ENCODE measurements at regions of chr2 and their contacts with region 1.

Region 1: GRCh38 chr2:160493227-160494028 is at the start of gene RBMS1:
- DNase-seq: peak; percentile 60
- ATAC-seq: peak; percentile 67
- H3K4me3 ChIP-seq: peak within 1 kb of the TSS; percentile 88 to 97 (median 95)
- H3K27ac ChIP-seq: peak within 1 kb of the TSS; percentile 96
- H3K4me1 ChIP-seq: peaks cover 32% of the 10 kb centered on the region
- H3K27me3 ChIP-seq: peaks cover 0 to 20% of the 10 kb centered on the region in 2 experiments; a peak in 3 of 5 replicates
- CTCF ChIP-seq: no peak
- EP300 ChIP-seq: no peak
- POLR2A ChIP-seq: peak in 1 of 2 experiments; percentile 79; a peak in 3 of 4 replicates
- RAD21 ChIP-seq: no peak
- total RNA-seq, gene RBMS1: 52.1 and 55.5 TPM in 2 replicates

Region 2: GRCh38 chr2:160324161-160324800 is 169.1 kb before region 1 on chr2:
- CTCF ChIA-PET with region 1: no interaction called
- POLR2A ChIA-PET with region 1: interaction called, 3 read pairs
- in situ Hi-C with region 1: no loop called
- intact Hi-C with region 1: loop called (anchors 2 kb)
- DNase-seq: peak; percentile 34
- ATAC-seq: peak; percentile 54
- H3K4me3 ChIP-seq: no peak overlapping the region
- H3K27ac ChIP-seq: no peak overlapping the region
- H3K4me1 ChIP-seq: peaks cover 35% of the 10 kb centered on the region
- H3K27me3 ChIP-seq: no peaks in the 10 kb centered on the region
- CTCF ChIP-seq: peak; percentile 74
- EP300 ChIP-seq: no peak
- POLR2A ChIP-seq: no peak
- RAD21 ChIP-seq: peak; percentile 65

Region 3: GRCh38 chr2:160406591-160407392 is 86.6 kb before region 1 on chr2:
- CTCF ChIA-PET with region 1: no interaction called
- POLR2A ChIA-PET with region 1: interaction called, 9 read pairs
- in situ Hi-C with region 1: no loop called
- intact Hi-C with region 1: loop called (anchors 1 kb)
- DNase-seq: peak; percentile 35
- ATAC-seq: peak; percentile 49
- H3K4me3 ChIP-seq: peak overlapping the region; percentile 67 to 87 (median 82)
- H3K27ac ChIP-seq: peak overlapping the region; percentile 17
- H3K4me1 ChIP-seq: peaks cover 56% of the 10 kb centered on the region
- H3K27me3 ChIP-seq: no peaks in the 10 kb centered on the region; a peak in 1 of 5 replicates
- CTCF ChIP-seq: peak; percentile 24; the same call in 1 of the 2 replicates
- EP300 ChIP-seq: no peak
- POLR2A ChIP-seq: 0 out of 4 replicates have a peak, but pooled peaks of 1 of the 2 experiments have one; percentile 27
- RAD21 ChIP-seq: no peak

Region 4: GRCh38 chr2:160429248-160430000 is 64.0 kb before region 1 on chr2:
- CTCF ChIA-PET with region 1: no interaction called
- POLR2A ChIA-PET with region 1: interaction called, 9 read pairs
- in situ Hi-C with region 1: no loop called
- intact Hi-C with region 1: loop called (anchors 1 kb)
- DNase-seq: peak; percentile 52
- ATAC-seq: peak; percentile 60
- H3K4me3 ChIP-seq: no peak overlapping the region
- H3K27ac ChIP-seq: no peak overlapping the region
- H3K4me1 ChIP-seq: peaks cover 16% of the 10 kb centered on the region
- H3K27me3 ChIP-seq: no peaks in the 10 kb centered on the region
- CTCF ChIP-seq: peak; percentile 32
- EP300 ChIP-seq: no peak
- POLR2A ChIP-seq: no peak
- RAD21 ChIP-seq: no peak

Region 5: DNA sequence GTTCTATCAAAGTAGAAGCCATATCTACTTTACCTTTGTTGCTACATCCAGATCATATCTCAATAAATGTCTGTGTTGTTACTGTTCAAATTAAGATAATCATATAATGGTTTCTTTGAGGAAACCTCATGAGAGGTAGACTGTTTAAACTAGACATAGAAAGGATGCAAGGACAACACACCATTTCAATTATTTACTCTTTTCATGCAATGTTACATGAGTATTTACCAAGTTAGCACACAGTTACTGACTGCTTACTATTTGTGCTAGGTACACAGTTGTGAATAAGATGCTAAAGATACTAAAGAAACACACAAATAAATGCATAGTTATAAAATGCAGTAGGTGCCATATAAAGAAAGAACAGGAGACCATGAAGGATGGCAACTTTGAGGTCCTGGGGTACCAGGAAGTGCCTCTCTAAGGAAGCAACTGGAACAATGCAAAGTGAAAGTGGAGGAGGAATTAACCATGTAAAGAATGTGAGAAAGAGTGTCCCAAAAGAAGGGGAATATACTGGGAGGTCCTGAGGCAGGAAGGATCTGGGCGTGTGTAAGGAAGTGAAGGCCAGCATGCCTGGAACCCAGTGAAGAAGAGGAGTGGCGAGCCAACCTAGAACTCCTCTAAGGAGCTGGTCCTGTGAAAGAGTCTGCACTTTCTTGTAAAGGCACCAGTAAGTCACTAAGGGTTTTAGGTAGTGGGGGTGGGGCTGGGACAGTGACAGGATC is 39.2 kb before region 1 on chr2:
- CTCF ChIA-PET with region 1: no interaction called
- POLR2A ChIA-PET with region 1: no interaction called
- in situ Hi-C with region 1: no loop called
- intact Hi-C with region 1: loop called (anchors 2 kb)
- DNase-seq: peak; percentile 50
- ATAC-seq: peak; percentile 67
- H3K4me3 ChIP-seq: no peak overlapping the region
- H3K27ac ChIP-seq: no peak overlapping the region
- H3K4me1 ChIP-seq: peaks cover 20% of the 10 kb centered on the region
- H3K27me3 ChIP-seq: no peaks in the 10 kb centered on the region
- CTCF ChIP-seq: no peak
- EP300 ChIP-seq: no peak
- POLR2A ChIP-seq: no peak
- RAD21 ChIP-seq: no peak

Region 6: GRCh38 chr2:160478682-160479668 is 14.5 kb before region 1 on chr2:
- CTCF ChIA-PET with region 1: no interaction called
- POLR2A ChIA-PET with region 1: interaction called, 11 read pairs
- in situ Hi-C with region 1: no loop called
- intact Hi-C with region 1: no loop called
- DNase-seq: no peak
- ATAC-seq: peak; percentile 57
- H3K4me3 ChIP-seq: no peak overlapping the region
- H3K27ac ChIP-seq: no peak overlapping the region
- H3K4me1 ChIP-seq: peaks cover 26% of the 10 kb centered on the region
- H3K27me3 ChIP-seq: no peaks in the 10 kb centered on the region
- CTCF ChIP-seq: no peak
- EP300 ChIP-seq: no peak
- POLR2A ChIP-seq: no peak
- RAD21 ChIP-seq: no peak